H1 (cell line): ENCODE measurements at regions of chr7 and their contacts with region 1.

Region 1: DNA sequence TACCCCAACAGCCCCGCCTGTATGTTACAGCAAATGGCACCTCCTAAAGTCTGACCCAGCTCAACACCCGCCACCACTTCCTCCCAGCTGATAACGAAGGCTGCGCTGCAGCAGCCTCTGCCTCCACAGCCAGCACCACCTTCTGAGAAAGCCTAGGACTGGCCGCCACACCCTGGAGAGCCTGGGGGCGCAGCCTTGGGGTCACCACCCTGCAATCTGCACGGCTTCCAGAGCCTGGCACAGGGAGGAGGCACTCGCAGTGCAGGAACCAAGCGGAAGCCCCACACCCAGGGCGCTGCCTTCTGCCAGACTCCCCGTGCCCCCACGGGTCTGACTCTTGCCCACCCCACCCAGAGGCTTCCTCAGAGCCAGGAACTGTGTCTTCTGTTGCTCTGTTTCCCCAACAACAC is 112.5 kb downstream of the MAD1L1 start:
- DNase-seq: no peak
- H3K4me3 ChIP-seq: no peak overlapping the region
- H3K27ac ChIP-seq: no peak overlapping the region
- H3K4me1 ChIP-seq: no peaks in the 10 kb centered on the region
- H3K27me3 ChIP-seq: no peaks in the 10 kb centered on the region
- CTCF ChIP-seq: no peak
- EP300 ChIP-seq: no peak
- POLR2A ChIP-seq: no peak
- RAD21 ChIP-seq: no peak

Region 2: GRCh38 chr7:2087744-2088143 is 32.5 kb before region 1 on chr7:
- CTCF ChIA-PET with region 1: no interaction called
- POLR2A ChIA-PET with region 1: no interaction called
- DNase-seq: no peak
- H3K4me3 ChIP-seq: no peak overlapping the region
- H3K27ac ChIP-seq: no peak overlapping the region
- H3K4me1 ChIP-seq: no peaks in the 10 kb centered on the region
- H3K27me3 ChIP-seq: no peaks in the 10 kb centered on the region
- CTCF ChIP-seq: no peak
- EP300 ChIP-seq: no peak
- POLR2A ChIP-seq: no peak
- RAD21 ChIP-seq: no peak

Region 3: DNA sequence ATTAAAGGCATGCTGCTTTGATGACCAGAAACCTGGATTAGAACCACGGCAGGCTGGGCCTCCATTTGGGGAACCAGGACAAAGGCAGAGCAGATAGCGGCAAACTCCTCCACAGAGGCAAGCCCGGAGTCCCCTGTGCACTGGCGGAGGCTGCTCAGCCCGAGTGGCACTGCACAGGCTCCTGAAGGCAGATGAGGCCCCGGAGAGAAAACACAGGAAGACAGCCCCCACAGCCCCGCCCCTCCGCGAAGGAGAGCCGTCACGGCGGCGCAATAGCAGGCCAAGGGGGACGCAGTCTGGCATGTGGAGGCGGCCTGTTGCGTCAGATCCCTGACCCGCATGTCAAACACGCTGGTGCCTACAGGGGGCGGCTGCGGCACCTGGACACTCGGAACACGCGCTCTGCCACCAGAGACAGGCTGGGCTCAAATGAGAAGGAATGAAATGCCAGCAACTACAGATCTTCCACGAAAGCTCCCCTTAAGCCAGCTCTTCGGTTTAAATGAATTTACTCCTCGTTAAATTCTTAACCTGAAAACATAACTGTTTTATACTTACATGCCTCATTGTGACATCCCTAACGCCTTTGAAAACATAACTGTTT is 16.0 kb before region 1 on chr7:
- CTCF ChIA-PET with region 1: interaction called, 11 read pairs
- POLR2A ChIA-PET with region 1: no interaction called
- DNase-seq: peak; percentile 43 to 88
- H3K4me3 ChIP-seq: no peak overlapping the region
- H3K27ac ChIP-seq: no peak overlapping the region
- H3K4me1 ChIP-seq: peaks cover 0 to 30% (median 11%) of the 10 kb centered on the region in 4 experiments; a peak in 6 of 7 replicates
- H3K27me3 ChIP-seq: no peaks in the 10 kb centered on the region
- CTCF ChIP-seq: peak in 2 of 3 experiments; percentile 68 to 72; a peak in 3 of 4 replicates
- EP300 ChIP-seq: no peak
- POLR2A ChIP-seq: no peak
- RAD21 ChIP-seq: peak; percentile 43 to 56; a peak in 3 of 4 replicates